Activated T-helper 1 cell treated with anti-CD3 and anti-CD28 coated beads, Interleukin-12 subunit alpha, Interleukin-12 subunit beta, Interleukin-2, Interleukin-4 antibody, amounts not matched to agents 30 ng/mL and 10 ng/mL and 1 ng/mL, durations not matched to agents 14 hours and 24 hours and 36 hours (primary cell): ENCODE measurements at regions of chr11 and their contacts with region 1.

Region 1: GRCh38 chr11:9573052-9573774 is at the start of gene WEE1:
- DNase-seq: peak; percentile 99
- H3K4me3 Mint-ChIP-seq: peak within 1 kb of the TSS; percentile 93
- H3K27ac Mint-ChIP-seq: peak within 1 kb of the TSS; percentile 88
- H3K4me1 Mint-ChIP-seq: peaks cover 42% of the 10 kb centered on the region
- H3K27me3 Mint-ChIP-seq: peaks cover 7% of the 10 kb centered on the region
- total RNA-seq, gene WEE1: 51.4 and 54.2 TPM in 2 replicates

Region 2: DNA sequence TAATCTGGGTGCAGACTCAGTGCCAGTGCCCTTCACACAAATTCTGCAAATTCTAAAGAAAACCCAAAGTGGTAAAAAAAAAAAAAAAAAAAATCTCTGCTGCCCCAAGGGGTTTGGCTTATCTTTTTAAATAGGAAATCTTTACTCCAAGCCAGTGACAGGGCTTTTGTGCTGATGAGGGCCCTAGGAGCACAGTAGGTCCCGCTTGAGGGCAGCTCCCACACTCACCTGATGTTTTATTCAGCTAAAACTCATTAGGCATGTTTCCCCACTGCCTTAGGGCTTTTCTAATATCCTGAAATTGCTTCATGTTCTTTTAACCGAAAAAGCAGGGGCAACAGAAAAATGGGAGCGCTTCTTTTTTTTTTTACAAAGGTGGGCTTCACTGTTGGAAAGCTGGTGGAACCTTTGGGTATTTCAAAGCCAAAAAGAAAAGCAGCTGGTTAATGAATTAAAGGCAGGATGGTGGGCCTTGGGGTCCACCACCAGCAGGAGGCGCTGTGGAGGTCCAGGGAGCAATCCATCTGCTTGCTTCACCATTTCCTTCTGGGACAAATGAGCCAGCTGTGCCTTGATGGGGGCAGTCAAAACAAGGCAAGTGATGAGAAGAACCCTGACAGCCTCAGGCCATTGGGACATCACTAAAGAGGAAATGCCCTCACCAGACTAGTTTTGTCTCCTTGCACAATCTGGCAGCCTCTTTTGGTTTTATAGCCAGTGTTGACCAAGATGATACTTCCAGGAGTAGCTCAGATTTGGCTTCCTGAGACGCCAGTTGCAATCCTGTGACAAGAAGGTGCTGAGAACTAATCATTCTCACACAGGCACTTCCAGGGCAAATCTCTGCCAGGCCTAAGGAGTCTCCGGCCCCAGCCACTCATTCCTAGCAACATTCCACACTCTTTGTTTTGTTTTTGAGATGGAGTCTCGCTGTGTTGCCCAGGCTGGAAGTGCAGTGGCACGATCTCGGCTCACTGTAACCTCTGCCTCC is 38.1 kb before region 1 on chr11:
- intact Hi-C with region 1: loop called (anchors 1 kb)
- DNase-seq: peak; percentile 59
- H3K4me3 Mint-ChIP-seq: no peak overlapping the region
- H3K27ac Mint-ChIP-seq: no peak overlapping the region
- H3K4me1 Mint-ChIP-seq: no peaks in the 10 kb centered on the region
- H3K27me3 Mint-ChIP-seq: no peaks in the 10 kb centered on the region

Region 3: DNA sequence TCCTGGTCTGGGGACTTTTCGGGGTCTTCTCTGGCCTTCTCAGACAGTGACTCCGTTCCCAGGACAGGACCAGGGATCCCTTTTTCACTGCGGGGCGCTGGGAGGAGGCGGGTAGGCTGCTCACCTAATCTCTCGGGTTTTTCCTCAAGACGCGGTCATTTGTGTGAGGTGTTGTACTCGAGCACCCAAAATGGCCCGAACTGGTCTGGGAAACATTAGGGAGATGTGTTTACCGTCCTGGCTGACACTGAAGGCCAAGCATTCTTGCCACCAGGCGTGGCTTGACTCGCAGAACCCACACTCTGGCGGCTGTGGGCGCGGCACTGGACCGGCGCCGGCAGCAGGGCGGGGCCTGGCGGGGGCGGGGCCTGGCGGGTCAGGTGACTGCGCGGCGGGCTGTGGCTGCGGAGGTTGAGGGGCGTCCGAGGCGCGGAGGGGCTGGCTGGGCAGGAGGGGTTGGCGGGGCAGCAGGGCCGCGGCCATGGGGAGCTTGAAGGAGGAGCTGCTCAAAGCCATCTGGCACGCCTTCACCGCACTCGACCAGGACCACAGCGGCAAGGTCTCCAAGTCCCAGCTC is 90.6 kb after region 1 on chr11 and contains the start of gene SWAP70:
- intact Hi-C with region 1: loop called (anchors 2 kb)
- DNase-seq: peak; percentile 79
- H3K4me3 Mint-ChIP-seq: peak within 1 kb of the TSS; percentile 88
- H3K27ac Mint-ChIP-seq: peak within 1 kb of the TSS; percentile 31
- H3K4me1 Mint-ChIP-seq: peaks cover 18% of the 10 kb centered on the region
- H3K27me3 Mint-ChIP-seq: peaks cover 27% of the 10 kb centered on the region
- total RNA-seq, gene SWAP70: 6.3 and 8.5 TPM in 2 replicates

Region 4: DNA sequence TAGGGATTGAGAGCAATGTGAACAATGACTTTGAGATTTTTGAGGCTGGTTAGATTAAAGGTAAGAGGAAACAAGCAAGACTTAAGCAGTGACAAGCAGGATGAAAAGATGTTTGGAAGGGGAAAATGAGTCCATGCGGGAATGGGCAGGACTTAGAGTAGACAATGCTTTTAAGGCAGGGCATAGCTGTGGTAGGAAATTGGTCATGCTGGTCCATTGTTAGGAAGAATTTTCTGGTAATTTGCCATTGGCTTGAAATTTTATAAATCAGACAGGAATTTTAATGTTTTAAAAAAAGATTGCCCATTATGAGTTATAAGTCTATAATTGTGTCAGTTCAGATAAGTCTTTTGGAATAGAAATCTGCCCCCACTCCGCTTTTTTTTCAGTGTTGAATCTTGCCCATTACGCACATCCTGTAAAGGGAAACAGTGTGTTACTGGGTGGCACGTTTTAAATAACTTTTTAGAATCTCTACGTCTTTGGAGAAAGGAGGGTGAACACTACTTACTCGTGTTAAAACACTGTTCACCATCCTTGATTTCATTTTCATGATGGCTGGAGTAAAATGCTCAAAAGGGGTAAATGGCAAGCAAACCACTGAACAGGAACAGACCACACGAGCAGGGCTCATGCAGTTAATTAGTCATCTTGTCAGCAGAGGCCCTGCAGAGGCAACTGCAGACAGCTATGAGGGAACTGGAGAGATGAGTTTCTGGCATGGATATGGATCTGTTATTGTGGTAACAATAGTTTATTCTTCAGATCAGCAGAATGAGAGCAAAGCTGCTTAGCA is 115.7 kb after region 1 on chr11:
- intact Hi-C with region 1: no loop called
- DNase-seq: no peak
- H3K4me3 Mint-ChIP-seq: no peak overlapping the region
- H3K27ac Mint-ChIP-seq: no peak overlapping the region
- H3K4me1 Mint-ChIP-seq: no peaks in the 10 kb centered on the region
- H3K27me3 Mint-ChIP-seq: peaks cover 5% of the 10 kb centered on the region

Region 5: GRCh38 chr11:10044618-10045017 is 471.4 kb after region 1 on chr11:
- intact Hi-C with region 1: no loop called
- DNase-seq: no peak
- H3K4me3 Mint-ChIP-seq: no peak overlapping the region
- H3K27ac Mint-ChIP-seq: no peak overlapping the region
- H3K4me1 Mint-ChIP-seq: no peaks in the 10 kb centered on the region
- H3K27me3 Mint-ChIP-seq: no peaks in the 10 kb centered on the region

Region 6: DNA sequence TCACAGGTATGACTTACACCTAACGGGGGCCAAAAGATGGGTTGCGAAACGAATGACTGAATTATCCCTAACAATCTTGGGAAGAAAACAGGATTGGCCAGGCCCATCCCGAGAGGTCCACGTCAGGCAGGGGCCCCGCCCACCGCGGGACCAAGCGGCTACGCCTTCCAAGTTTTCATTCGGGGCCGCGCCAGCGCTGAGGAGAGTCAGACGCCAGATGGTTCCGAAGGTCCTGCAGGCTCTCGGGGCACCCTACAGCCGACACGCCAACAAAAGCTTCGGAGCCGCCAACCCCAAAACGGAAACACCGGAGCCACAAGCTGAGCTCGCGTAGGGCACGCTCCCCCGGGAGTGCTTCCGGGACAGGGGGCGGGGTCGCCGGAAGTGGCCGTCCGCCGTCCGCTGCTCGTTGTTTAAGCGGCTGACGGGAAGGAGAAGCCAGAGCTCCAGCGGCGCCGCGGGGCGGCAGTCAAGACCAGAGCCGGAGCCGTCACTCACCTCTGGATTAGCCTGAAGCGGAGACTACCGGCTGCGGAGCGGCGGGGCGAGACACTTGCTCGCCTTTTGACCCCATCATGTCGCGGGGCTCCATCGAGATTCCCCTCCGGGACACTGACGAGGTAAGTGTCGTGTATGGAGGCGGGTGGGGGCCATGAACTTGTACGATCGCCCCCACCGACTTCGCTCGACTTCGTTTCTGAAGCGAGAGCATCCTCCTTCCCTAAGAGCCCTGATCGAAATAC is 1177.8 kb after region 1 on chr11 and contains the start of gene CTR9:
- intact Hi-C with region 1: loop called (anchors 5 kb)
- DNase-seq: peak; percentile 92
- H3K4me3 Mint-ChIP-seq: peak within 1 kb of the TSS; percentile 96
- H3K27ac Mint-ChIP-seq: peak within 1 kb of the TSS; percentile 87
- H3K4me1 Mint-ChIP-seq: peaks cover 38% of the 10 kb centered on the region
- H3K27me3 Mint-ChIP-seq: no peaks in the 10 kb centered on the region
- total RNA-seq, gene CTR9: 46.2 and 51.1 TPM in 2 replicates